BJ (cell line): ENCODE measurements at regions of chr5 and their contacts with region 1.

Region 1: DNA sequence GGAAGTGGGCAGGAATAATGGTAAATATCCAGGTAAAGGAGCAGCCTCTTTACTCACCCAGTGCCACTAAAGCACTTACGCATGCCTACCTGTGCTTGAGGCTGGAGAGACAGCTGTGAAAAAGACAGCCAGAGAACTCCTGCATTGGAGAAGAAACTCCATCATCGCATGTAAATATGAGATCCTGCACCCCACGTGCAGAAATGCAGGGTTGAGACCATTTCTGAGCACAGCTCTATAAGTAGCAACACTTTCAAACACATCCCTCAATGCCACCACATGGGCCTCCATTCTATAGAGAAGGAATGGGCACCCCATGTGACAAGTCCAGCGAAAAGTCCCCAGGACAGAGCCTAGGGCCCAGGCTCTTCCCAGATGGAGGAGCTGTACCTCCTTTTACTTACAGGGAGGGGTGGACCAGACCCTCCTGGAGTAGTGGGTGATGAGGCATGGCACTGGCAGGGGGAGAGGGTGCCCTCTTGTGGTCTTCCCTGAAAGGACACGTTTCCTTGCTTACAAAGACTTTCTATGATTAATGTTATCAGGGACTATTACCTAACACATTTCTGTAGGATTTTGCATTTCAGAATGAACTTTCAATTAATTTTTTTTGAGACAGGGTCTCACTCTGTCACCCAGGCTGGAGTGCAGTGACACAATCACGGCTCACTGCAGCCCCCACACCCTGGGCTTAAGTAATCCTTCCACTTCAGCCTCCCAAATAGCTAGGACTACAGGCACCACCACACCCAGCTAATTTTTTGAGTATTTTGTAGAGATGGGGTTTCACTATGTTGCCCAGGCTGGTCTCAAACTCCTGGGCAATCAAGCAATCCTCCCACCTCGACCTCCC is 55.3 kb upstream of the IL17B start:
- DNase-seq: no peak
- H3K4me3 ChIP-seq: no peak overlapping the region
- H3K27me3 ChIP-seq: no peaks in the 10 kb centered on the region
- CTCF ChIP-seq: peak; percentile 89

Region 2: DNA sequence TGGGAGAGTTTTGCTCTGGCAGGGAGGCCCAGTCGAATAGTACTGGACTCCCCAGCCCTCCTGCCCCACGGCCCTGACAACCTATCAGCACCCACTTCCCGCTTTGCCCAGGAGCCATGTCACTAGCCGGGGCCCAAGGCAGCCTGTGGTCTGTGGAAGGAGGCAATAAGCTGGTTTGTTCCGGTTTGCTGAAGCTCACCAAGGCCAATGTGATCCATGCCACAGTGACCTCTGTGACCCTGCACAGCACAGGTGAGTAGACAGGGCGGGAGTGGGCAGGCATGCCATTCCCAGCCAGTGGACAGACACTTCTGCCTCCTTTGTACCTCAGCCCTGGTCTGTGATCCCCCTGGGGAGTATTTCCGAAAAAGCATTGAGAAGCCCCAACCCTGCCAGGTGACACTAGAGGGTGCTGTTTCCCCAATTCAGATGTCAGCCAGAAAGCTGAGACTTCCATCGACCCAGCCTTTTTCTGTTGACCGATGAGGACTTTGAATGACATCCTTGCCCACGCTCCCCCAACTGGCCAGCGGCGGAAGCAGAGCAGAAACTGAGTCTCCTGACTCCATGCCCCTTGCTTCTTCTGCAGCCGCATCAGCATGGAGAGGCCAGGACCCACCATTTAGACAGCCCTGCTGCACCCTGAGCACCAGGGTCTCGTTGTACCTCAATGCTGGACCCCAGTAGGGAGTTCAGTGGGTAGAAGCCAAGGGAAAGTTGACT is 67.0 kb before region 1 on chr5:
- CTCF ChIA-PET with region 1: interaction called, 89 read pairs
- POLR2A ChIA-PET with region 1: no interaction called
- DNase-seq: no peak
- H3K4me3 ChIP-seq: no peak overlapping the region
- H3K27me3 ChIP-seq: no peaks in the 10 kb centered on the region
- CTCF ChIP-seq: peak; percentile 91

Region 3: DNA sequence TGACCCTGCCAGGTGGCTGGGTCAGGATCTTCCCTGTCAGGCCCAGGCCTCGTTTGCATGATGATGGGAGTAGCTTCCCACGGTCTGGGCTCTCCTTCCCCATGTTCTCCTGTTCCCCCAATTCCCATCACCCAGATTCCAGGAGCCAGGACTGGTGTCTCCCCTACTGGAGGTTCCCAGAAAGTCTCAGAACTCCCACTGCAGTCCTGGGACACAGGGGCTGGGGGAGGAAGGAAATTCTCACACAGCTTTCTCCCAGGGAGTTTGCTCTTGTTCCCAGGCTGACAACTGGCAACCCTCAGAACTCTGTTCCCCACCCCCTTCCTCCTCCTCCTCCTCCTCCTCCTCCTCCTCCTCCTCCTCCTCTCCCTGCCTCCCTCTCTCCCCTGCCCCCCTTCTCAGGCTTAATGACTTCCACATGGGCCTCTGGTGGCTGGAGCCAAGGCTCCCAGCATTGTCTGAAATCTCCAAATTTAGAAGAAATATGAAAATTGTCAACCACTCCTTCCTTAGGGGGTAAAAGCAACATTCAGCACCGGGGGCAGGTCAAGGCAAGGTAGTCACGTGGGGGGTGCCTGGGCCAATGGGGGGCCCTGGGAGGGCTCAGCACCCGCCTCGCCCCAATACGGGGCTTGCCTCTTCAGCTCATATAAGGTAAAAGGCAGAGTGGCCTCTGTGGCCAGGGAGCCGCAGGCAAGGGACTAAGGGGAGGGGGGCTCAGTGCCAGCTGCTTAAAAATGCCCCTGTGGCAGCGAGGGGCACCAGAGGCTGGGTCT is 28.0 kb before region 1 on chr5:
- CTCF ChIA-PET with region 1: interaction called, 13 read pairs
- POLR2A ChIA-PET with region 1: no interaction called
- DNase-seq: peak; percentile 93
- H3K4me3 ChIP-seq: peak overlapping the region; percentile 87
- H3K27me3 ChIP-seq: no peaks in the 10 kb centered on the region
- CTCF ChIP-seq: peak; percentile 35

Region 4: GRCh38 chr5:149551200-149552037 is 117.0 kb after region 1 on chr5 and contains the start of gene CSNK1A1:
- CTCF ChIA-PET with region 1: interaction called, 14 read pairs
- POLR2A ChIA-PET with region 1: no interaction called
- DNase-seq: peak; percentile 90
- H3K4me3 ChIP-seq: peak within 1 kb of the TSS; percentile 75
- H3K27me3 ChIP-seq: no peaks in the 10 kb centered on the region
- CTCF ChIP-seq: peak; percentile 80
- polyA plus RNA-seq, gene CSNK1A1: 171 and 268 TPM in 2 replicates

Region 5: DNA sequence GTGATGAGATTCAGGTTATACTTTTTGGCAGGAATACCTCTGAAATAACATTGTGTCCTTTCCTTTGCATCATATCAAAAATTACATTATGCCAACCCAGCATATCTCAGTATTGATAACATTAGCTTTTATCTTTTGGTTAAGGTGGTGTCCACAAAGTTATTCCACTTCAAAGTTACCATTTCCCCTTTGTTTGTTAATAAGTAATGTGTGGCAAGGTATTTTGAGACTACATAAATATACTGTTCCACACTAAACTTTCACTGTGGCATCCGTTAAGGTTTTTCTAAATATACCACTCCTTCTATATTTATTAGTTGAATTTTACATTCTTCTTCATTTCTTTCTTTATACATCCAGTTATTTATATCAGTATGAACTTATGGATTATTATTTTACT is 132.8 kb after region 1 on chr5:
- CTCF ChIA-PET with region 1: interaction called, 93 read pairs
- POLR2A ChIA-PET with region 1: no interaction called
- DNase-seq: no peak
- H3K4me3 ChIP-seq: no peak overlapping the region
- H3K27me3 ChIP-seq: no peaks in the 10 kb centered on the region
- CTCF ChIP-seq: no peak

Region 6: DNA sequence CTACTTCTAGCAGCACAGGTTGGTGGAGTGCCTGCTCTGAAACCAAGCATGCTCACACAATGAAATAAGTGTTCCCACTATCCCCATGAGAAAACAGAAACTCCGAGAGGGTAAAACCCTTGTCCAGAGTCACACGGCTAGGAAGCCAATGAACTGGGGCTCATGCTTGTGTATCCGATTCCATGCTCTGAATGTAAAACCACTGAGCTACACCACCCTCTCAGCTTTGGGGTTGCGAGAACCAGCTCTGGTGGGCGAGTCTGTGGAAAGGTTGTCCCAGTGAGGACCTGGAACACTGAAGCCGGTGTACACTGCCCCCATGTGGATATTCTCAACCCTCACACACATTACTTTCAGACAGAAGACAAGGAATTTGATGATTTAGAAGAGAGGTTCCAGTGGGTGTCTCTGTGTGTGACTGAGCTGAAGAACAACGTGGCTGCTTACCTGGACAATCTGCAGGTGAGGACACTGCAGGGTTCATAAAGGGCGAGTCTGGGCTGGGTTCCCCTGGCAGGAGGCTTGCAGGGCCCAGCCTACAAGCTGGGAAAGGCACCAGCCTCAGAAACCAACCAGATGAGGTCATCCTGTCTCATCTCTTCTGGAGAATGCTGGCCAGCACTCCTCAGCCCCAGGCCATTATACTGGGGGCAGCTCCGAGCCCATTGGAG is 184.3 kb after region 1 on chr5:
- CTCF ChIA-PET with region 1: interaction called, 13 read pairs
- POLR2A ChIA-PET with region 1: no interaction called
- DNase-seq: peak; percentile 35
- H3K4me3 ChIP-seq: no peak overlapping the region
- H3K27me3 ChIP-seq: peaks cover 3% of the 10 kb centered on the region
- CTCF ChIP-seq: peak; percentile 77